Sciatic nerve (tissue), 2 donors: ENCODE measurements at regions of chr7 and their contacts with region 1.

Region 1: GRCh38 chr7:100563809-100564400 is 9.8 kb downstream of the SAP25 start:
- DNase-seq: peak; percentile 93
- ATAC-seq: peak; percentile 66

Region 2: GRCh38 chr7:100691676-100692577 is 128.0 kb after region 1 on chr7:
- intact Hi-C with region 1: loop called (anchors 2 kb)
- DNase-seq: peak; percentile 91
- ATAC-seq: peak; percentile 88